ENCODE measurements at regions of chr1 and their contacts with region 1.

Region 1: DNA sequence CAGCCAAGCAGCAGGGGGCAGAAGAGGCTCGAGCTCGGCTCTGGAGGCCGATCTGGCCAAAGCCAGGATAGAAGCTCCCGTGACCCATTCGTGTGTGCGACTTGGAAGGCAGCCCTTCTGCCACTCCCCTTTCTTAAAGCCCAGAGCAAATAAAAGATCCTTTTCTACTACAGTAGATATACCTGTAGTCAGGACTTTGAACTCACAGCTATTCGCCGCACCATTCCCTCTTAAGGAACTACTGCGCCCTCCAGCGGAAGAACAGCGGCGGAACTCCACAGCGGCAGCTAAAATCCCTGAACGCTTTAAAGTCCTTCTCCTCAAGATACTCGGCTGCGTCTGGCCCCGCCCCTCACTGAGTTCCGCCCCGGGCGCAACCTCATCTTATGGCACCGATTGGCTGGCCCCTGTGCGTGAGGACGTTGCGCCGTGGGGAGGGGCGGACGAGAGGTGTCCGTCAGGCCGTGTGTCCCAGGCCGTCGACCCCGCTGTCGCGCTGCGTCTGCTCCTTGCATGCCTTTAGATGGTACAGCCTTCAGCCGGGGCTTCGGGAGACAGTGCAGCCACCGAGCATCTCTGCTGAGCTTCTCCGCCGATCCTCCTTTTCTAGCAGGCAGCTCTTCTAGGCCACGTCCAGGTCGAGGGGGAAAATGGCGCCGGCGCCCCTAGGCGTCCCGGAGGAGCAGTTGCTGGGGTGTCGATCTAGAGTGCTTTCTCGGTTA is at the start of gene LRIG2:
- DNase-seq: peak; percentile 99
- H3K4me3 Mint-ChIP-seq: peak within 1 kb of the TSS; percentile 94
- H3K27ac Mint-ChIP-seq: peak within 1 kb of the TSS; percentile 91
- H3K4me1 Mint-ChIP-seq: peaks cover 27% of the 10 kb centered on the region
- H3K27me3 Mint-ChIP-seq: no peaks in the 10 kb centered on the region
- total RNA-seq, gene LRIG2: 7.7 to 9.1 TPM

Region 2: DNA sequence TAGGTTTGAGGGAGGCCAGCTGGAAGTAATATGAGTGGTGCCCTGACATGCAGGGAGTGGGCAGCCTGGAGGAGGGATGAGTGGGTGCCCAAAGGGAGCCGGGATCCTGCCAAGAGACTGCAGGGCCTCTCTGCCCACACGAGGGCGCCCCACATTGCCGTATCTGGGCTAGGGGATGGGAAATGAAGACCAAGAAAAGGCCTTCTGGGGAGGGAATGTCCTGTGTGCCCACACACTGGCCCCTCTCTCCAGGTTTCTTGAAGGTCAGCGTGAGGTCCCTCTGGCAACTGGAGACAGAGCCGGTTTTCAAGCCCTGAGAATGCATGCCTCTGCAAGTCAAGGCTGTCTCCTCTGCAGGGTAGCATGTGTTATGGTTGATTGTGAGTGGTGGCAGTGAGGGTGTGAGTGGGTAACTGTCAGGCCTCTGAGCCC is 263.6 kb before region 1 on chr1:
- CTCF ChIA-PET with region 1: interaction called, 10 read pairs
- intact Hi-C with region 1: loop called (anchors 2 kb)
- DNase-seq: peak; percentile 85
- H3K4me3 Mint-ChIP-seq: no peak overlapping the region
- H3K27ac Mint-ChIP-seq: no peak overlapping the region
- H3K4me1 Mint-ChIP-seq: no peaks in the 10 kb centered on the region
- H3K27me3 Mint-ChIP-seq: peaks cover 2% of the 10 kb centered on the region

Region 3: DNA sequence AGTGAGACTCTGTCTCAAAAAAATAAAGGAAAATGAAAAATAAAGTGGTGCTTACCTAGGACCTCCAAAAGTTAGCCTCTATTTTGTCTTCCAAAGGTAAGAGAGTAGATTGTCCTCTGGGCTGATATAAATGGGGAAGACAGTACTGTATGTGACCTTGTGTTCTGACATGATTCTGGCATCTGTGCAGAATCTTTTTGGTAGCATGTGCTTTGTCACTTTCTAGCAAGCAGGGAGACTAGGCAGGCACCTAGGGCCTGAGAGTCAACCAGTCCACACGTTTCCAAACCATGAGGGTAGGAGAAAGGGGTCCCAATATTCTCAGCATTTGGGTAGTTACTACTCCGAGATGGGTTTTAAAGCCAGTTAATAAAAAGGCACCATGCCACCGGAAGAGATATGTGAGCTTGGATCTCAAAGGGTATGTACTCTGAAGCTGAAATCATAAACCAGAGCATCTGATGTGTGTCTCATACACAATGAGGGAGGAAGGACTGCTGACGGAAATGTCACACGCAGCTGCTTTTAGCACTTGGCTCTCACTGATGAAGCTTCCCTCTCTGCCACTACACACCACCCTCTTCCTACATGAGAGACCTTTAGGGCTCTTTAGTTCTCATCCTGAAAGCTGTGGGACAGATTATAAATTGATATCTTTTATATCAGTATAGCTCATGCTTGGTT is 89.9 kb before region 1 on chr1:
- CTCF ChIA-PET with region 1: no interaction called
- intact Hi-C with region 1: no loop called
- DNase-seq: no peak
- H3K4me3 Mint-ChIP-seq: no peak overlapping the region
- H3K27ac Mint-ChIP-seq: no peak overlapping the region
- H3K4me1 Mint-ChIP-seq: no peaks in the 10 kb centered on the region
- H3K27me3 Mint-ChIP-seq: no peaks in the 10 kb centered on the region

Region 4: GRCh38 chr1:113057006-113057405 is 15.9 kb before region 1 on chr1:
- CTCF ChIA-PET with region 1: interaction called, 19 read pairs
- intact Hi-C with region 1: no loop called
- DNase-seq: no peak
- H3K4me3 Mint-ChIP-seq: no peak overlapping the region
- H3K27ac Mint-ChIP-seq: no peak overlapping the region
- H3K4me1 Mint-ChIP-seq: no peaks in the 10 kb centered on the region
- H3K27me3 Mint-ChIP-seq: no peaks in the 10 kb centered on the region

Region 5: GRCh38 chr1:113140588-113141446 is 67.9 kb after region 1 on chr1:
- CTCF ChIA-PET with region 1: interaction called, 23 read pairs
- intact Hi-C with region 1: loop called (anchors 2 kb)
- DNase-seq: peak; percentile 81
- H3K4me3 Mint-ChIP-seq: no peak overlapping the region
- H3K27ac Mint-ChIP-seq: no peak overlapping the region
- H3K4me1 Mint-ChIP-seq: peaks cover 22% of the 10 kb centered on the region
- H3K27me3 Mint-ChIP-seq: no peaks in the 10 kb centered on the region

Region 6: DNA sequence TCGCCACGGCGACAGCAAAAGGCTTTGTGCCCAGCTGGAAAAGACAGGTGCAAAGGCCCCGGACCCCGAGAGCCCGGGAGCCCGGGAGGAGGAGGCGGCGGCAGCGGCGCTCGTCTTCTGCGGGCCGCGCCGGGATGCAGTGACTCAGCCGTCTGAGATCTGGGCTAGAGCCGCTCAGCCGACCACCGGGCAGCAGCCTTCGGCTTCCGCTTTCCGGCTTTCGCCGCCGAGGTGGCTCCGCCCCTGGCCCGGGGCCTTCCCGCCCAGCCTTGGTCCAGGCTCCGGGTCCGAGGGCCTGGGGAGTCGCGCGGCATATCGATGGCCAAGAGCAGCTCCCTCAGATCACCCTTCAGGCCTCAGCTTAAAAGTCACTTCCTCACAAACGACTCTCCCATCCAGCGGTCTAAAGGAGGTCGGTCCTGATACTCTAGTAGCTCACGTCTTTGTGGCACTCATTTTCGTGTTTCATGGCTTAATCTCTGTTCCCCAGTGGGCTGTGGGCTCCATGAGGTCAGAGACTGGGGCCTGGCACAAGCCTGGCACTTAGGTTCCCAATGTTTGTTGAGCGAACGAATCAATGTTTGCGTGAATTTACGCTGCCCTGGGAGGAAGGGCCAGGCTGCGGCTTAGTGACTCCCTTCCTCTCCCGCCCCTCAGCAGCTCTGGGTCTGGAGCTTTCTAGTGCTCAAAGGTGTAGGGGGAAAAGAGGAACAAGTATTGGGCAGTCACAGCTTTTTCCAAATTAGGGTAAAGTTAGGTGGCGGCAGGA is 686.6 kb after region 1 on chr1 and contains the start of gene PHTF1:
- CTCF ChIA-PET with region 1: no interaction called
- intact Hi-C with region 1: loop called (anchors 5 kb)
- DNase-seq: peak; percentile 63
- H3K4me3 Mint-ChIP-seq: peak within 1 kb of the TSS; percentile 92
- H3K27ac Mint-ChIP-seq: peak within 1 kb of the TSS; percentile 96
- H3K4me1 Mint-ChIP-seq: peaks cover 14% of the 10 kb centered on the region
- H3K27me3 Mint-ChIP-seq: no peaks in the 10 kb centered on the region
- total RNA-seq, gene PHTF1: 5.4 to 6.3 TPM